ENCODE measurements at regions of chr10 and their contacts with region 1.

Region 1: DNA sequence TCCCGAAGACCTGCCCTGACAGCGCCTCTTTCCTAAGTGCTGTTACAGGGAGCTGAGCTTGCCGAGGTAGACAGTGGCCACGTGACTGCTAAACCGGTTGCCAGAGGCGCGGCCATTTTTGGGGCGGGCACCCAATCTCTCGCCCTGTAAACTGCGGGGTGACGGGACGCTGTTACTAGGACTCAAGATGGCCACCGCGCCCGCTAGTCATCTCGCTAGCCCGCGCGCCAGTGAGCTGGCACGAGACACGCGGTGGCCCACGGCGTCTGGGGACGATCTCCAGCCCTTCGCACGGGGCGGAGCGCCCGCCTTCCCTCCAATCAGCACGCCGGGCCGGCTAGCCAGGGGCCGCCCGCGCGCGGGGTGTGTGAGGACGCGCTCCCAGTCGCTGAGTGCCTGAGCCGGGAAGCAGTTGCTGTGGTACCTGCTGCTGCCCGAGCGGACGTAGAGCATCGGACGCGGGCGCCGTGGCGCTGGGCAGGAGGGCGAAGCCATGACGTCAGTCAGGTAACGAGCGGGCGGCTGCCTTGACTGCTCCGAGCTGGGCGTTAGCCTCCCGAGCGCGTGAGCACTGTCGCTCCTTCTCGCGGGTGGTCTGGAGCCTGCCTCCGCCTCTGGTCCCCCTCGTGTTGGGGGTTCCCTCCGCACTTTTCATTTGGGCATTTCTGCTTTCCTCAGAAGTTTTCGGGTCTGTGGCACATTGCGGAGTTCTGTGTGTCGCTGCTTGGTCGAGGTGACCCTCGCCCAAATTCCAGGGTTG is 25.5 kb downstream of the ADK start:
- DNase-seq: peak; percentile 91
- H3K4me3 ChIP-seq: peak overlapping the region; percentile 74
- H3K27ac ChIP-seq: peak overlapping the region; percentile 52
- H3K4me1 ChIP-seq: peaks cover 20% of the 10 kb centered on the region
- CTCF ChIP-seq: no peak

Region 2: GRCh38 chr10:74165530-74165901 is 11.0 kb before region 1 on chr10:
- CTCF ChIA-PET with region 1: no interaction called
- POLR2A ChIA-PET with region 1: interaction called, 25 read pairs
- intact Hi-C with region 1: no loop called
- DNase-seq: no peak
- H3K4me3 ChIP-seq: no peak overlapping the region
- H3K27ac ChIP-seq: no peak overlapping the region
- H3K4me1 ChIP-seq: peaks cover 50% of the 10 kb centered on the region
- CTCF ChIP-seq: no peak

Region 3: DNA sequence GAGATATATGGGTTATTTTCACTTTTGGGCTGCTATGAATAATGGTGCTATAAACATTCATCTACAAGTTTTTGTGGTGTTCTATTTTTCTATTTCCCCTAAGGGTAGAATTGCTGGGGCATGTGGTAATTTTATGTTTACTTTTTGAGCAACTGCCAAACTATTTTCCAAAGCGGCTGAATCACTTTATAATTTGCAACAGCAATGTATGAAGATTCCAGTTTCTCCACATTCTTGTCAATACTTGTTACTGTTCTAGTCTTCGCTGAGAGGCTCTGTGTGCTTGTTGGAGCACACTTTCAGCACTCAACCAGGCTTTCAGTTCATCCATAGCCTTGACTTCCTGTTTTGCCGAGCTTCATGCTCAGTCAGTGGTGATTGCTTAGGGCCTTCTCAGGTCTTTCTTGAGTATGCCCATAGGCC is 13.4 kb after region 1 on chr10:
- CTCF ChIA-PET with region 1: no interaction called
- POLR2A ChIA-PET with region 1: interaction called, 11 read pairs
- intact Hi-C with region 1: no loop called
- DNase-seq: peak; percentile 78
- H3K4me3 ChIP-seq: peak overlapping the region; percentile 50
- H3K27ac ChIP-seq: peak overlapping the region; percentile 48
- H3K4me1 ChIP-seq: peaks cover 23% of the 10 kb centered on the region
- CTCF ChIP-seq: no peak

Region 4: DNA sequence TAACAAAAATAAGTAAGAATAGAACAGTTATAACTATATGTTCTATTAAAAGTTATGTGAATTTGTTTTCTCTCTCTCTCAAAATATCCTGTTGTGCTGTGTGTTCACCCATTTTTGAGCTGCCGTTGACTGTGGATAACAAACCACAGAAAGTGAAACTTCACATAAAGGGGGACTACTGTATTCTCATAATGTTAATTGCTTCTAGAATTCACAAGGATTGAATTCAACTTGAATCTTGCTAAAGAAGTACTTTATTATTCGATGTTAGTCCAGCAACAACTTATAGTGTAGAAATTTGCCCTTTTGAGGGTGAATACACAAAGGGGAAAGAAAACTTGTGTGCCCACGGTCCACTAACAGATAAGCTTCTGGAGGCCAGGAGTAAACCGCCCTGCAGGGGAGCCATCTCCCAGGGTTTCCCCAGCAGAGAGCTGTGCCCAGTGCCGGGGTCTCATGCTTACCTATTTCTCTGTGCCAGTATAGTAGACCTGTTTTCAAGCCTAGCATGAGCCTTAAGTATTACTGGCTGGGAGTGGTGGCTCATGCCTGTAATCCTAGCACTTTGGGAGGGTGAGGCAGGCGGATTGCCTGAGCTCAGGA is 736.9 kb after region 1 on chr10:
- CTCF ChIA-PET with region 1: no interaction called
- POLR2A ChIA-PET with region 1: no interaction called
- intact Hi-C with region 1: no loop called
- DNase-seq: no peak
- H3K4me3 ChIP-seq: no peak overlapping the region
- H3K27ac ChIP-seq: no peak overlapping the region
- H3K4me1 ChIP-seq: no peaks in the 10 kb centered on the region
- CTCF ChIP-seq: no peak